Head of caudate nucleus (tissue), 42 donors: ENCODE measurements at regions of chr5 and their contacts with region 1.

Region 1: GRCh38 chr5:147453875-147454814 is 55.7 kb downstream of the DPYSL3 start:
- DNase-seq: peak; percentile 59 to 95 (median 91)

Region 2: DNA sequence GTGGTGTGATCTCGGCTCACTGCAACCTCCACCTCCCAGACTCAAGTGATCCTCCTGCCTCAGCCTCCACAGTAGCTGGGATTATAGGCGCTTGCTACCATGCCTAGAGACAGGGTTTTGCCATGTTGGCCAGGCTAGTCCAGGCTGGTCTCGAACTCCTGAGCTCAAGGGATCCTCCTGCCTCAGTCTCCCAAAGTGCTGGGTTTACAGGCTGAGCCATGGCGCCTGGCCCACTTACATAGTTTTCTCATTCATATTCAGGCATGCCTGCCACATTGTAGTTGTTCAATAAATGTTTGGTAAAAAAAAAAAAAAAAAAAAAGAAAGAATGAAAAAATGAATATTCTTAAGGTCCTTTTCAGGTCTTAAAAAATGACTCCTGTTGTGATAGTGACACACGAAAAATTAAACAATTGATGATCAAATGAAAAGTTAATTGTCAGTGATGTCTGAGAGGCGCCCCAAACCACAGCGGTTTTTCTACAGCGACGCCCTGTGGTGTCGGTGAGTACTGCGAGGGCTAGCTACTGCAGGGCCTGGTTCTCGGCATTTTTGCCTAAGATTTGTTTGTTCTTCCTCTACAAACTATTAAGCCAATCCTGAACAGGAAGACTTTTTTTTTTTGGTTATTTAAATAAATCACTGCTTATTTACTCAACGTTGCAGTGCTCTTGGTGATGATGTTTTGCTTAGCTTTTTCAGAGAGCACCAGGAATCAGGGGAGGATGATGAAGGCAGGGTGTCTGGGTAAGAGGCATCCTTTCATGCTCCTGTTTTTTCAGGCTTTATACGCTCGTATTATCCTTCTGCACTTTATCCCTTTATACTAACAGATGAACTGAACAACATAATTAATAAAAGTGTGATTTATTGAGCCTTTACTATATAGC is 122.7 kb after region 1 on chr5:
- intact Hi-C with region 1: loop called (anchors 5 kb)
- DNase-seq: peak in 41 of 42 donors; percentile 16 to 85 (median 66)